Caco-2 (cell line): ENCODE measurements at regions of chr11 and their contacts with region 1.

Region 1: GRCh38 chr11:68965901-68966853 is 14.6 kb downstream of the MRGPRD start:
- DNase-seq: peak in 1 of 2 experiments; percentile 25
- H3K4me3 ChIP-seq: no peak overlapping the region
- H3K4me3 Mint-ChIP-seq: no peak overlapping the region
- H3K27ac Mint-ChIP-seq: no peak overlapping the region
- H3K4me1 ChIP-seq: no peaks in the 10 kb centered on the region
- H3K4me1 Mint-ChIP-seq: no peaks in the 10 kb centered on the region
- H3K27me3 ChIP-seq: no peaks in the 10 kb centered on the region
- H3K27me3 Mint-ChIP-seq: no peaks in the 10 kb centered on the region
- CTCF ChIP-seq: no peak

Region 2: DNA sequence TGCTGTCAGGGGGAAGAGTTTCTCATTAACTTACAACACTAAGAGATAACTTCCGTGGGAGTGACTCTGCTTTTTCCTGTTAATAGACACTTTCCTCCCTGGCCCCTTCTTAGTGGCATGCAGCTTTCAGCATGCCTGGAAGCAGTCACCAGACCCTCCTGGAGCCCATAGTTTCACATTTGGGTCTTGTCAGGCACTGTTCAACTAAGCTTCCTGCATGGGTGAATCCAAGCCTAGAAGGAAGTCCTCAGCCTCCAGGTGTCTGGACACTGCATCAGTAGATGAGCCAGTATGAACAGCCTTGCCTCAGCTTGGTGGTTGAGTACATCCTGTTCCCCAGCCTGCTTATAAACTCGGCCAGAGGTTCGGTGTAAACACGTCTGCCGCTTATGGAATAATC is 437.5 kb before region 1 on chr11:
- CTCF ChIA-PET with region 1: no interaction called
- POLR2A ChIA-PET with region 1: no interaction called
- intact Hi-C with region 1: no loop called
- DNase-seq: no peak
- H3K4me3 ChIP-seq: no peak overlapping the region
- H3K4me3 Mint-ChIP-seq: no peak overlapping the region
- H3K27ac Mint-ChIP-seq: no peak overlapping the region
- H3K4me1 ChIP-seq: peaks cover 21% of the 10 kb centered on the region
- H3K4me1 Mint-ChIP-seq: peaks cover 32% of the 10 kb centered on the region
- H3K27me3 ChIP-seq: no peaks in the 10 kb centered on the region
- H3K27me3 Mint-ChIP-seq: no peaks in the 10 kb centered on the region
- CTCF ChIP-seq: no peak

Region 3: DNA sequence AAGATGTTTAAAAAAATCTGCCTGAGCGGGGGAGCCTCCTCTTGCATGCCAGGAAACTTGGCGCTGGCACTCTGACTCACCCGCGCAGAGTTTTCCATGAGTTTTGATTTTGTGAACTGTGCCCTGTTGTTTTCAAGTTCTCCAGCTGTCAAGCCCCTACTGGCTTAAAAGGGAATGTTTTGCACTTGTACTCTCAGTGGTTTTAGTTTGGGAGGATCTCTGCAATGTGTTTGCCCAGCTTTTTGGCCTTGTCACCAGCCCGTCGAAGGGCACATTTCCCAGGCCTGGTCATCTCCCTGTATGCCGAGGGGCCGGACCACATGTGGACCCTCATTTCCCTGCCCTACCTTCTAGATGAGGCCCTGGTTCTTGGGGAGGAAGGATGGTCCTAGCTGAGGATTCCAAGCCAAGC is 34.7 kb after region 1 on chr11:
- CTCF ChIA-PET with region 1: no interaction called
- POLR2A ChIA-PET with region 1: no interaction called
- intact Hi-C with region 1: loop called (anchors 5 kb)
- DNase-seq: peak in 1 of 2 experiments; percentile 15
- H3K4me3 ChIP-seq: no peak overlapping the region
- H3K4me3 Mint-ChIP-seq: no peak overlapping the region
- H3K27ac Mint-ChIP-seq: no peak overlapping the region
- H3K4me1 ChIP-seq: no peaks in the 10 kb centered on the region
- H3K4me1 Mint-ChIP-seq: peaks cover 8% of the 10 kb centered on the region
- H3K27me3 ChIP-seq: no peaks in the 10 kb centered on the region
- H3K27me3 Mint-ChIP-seq: no peaks in the 10 kb centered on the region
- CTCF ChIP-seq: peak; percentile 59 to 63

Region 4: GRCh38 chr11:69048718-69049489 is 82.7 kb after region 1 on chr11 and contains the start of gene TPCN2:
- CTCF ChIA-PET with region 1: interaction called, 3 read pairs
- POLR2A ChIA-PET with region 1: no interaction called
- intact Hi-C with region 1: loop called (anchors 1 kb)
- DNase-seq: peak; percentile 97 to 98
- H3K4me3 ChIP-seq: peak within 1 kb of the TSS; percentile 96
- H3K4me3 Mint-ChIP-seq: peak within 1 kb of the TSS; percentile 79
- H3K27ac Mint-ChIP-seq: peak within 1 kb of the TSS; percentile 95
- H3K4me1 ChIP-seq: peaks cover 67% of the 10 kb centered on the region
- H3K4me1 Mint-ChIP-seq: peaks cover 42% of the 10 kb centered on the region
- H3K27me3 ChIP-seq: no peaks in the 10 kb centered on the region
- H3K27me3 Mint-ChIP-seq: no peaks in the 10 kb centered on the region
- CTCF ChIP-seq: no peak
- total RNA-seq, gene TPCN2: 59.5 and 63.6 TPM in 2 replicates